Left ventricle myocardium superior (tissue), 1 donor: ENCODE measurements at regions of chr7 and their contacts with region 1.

Region 1: GRCh38 chr7:90629297-90629918 is 33.3 kb downstream of the CDK14 start:
- DNase-seq: no peak
- ATAC-seq: peak; percentile 85

Region 2: GRCh38 chr7:90495256-90495655 is 134.2 kb before region 1 on chr7:
- intact Hi-C with region 1: no loop called
- DNase-seq: no peak
- ATAC-seq: no peak

Region 3: DNA sequence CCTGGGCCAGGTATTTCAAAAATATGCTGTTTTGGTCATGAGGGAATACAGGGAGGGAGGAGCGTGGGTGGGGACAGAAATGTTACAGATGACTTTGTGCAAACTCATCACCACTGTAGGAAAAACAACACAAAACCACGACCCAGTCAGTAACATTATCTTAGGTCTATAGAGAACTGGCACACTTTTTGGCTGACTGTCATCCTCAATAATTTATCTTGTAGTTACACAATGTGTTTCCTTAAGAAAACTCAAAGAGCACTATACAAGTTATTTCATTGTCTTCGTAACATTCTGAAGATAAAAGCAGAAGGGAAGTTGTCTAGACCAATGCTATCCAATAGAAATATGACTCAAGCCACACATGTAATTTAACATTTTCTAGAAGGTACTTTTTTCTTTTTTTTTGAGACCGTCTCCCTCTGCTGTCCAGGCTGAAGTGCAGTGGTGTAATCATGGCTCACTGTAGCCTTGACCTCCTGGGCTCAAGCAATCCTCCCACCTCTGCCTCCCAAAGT is 50.2 kb before region 1 on chr7:
- intact Hi-C with region 1: loop called (anchors 10 kb)
- DNase-seq: no peak
- ATAC-seq: no peak